K562 (cell line): ENCODE measurements at regions of chr15 and their contacts with region 1.

Region 1: GRCh38 chr15:78565097-78565951 is at the start of gene CHRNA5:
- DNase-seq: peak; percentile 90 to 95 (median 94)
- ATAC-seq: peak; percentile 96
- H3K4me3 ChIP-seq: peak within 1 kb of the TSS; percentile 69
- H3K27ac ChIP-seq: peak within 1 kb of the TSS; percentile 57
- H3K4me1 ChIP-seq: peaks cover 8 to 22% of the 10 kb centered on the region in 2 experiments; a peak in 4 of 5 replicates
- H3K27me3 ChIP-seq: no peaks in the 10 kb centered on the region
- CTCF ChIP-seq: no peak
- EP300 ChIP-seq: peak; percentile 46; the same call in 1 of the 2 replicates
- POLR2A ChIP-seq: peak; percentile 77
- RAD21 ChIP-seq: no peak
- polyA plus RNA-seq, gene CHRNA5: 2.8 to 3.4 TPM

Region 2: DNA sequence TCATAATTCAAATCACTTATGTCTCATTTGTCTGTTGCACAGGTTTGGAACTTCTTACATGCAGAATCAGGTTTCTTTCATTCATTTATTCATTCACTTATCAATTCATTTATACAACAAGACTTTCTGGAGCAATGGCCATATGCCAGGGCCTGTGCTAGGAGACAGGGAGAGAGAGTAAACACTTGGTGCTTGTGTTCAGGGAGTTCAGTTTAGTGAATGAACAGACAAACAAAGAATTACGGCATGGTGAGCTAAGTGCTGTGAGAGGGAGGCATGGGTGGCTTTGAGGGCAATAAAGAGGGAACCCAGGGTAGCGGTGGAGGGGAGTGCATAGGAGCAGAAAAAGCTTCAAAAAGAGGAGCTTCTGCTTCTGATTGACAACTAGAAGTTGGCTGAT is 135.8 kb before region 1 on chr15:
- CTCF ChIA-PET with region 1: no interaction called
- POLR2A ChIA-PET with region 1: no interaction called
- in situ Hi-C with region 1: no loop called
- intact Hi-C with region 1: no loop called
- DNase-seq: no peak
- ATAC-seq: no peak
- H3K4me3 ChIP-seq: no peak overlapping the region
- H3K27ac ChIP-seq: no peak overlapping the region
- H3K4me1 ChIP-seq: peaks cover 0 to 2% of the 10 kb centered on the region in 2 experiments; a peak in 4 of 5 replicates
- H3K27me3 ChIP-seq: no peaks in the 10 kb centered on the region
- CTCF ChIP-seq: no peak
- EP300 ChIP-seq: no peak
- POLR2A ChIP-seq: no peak
- RAD21 ChIP-seq: no peak

Region 3: DNA sequence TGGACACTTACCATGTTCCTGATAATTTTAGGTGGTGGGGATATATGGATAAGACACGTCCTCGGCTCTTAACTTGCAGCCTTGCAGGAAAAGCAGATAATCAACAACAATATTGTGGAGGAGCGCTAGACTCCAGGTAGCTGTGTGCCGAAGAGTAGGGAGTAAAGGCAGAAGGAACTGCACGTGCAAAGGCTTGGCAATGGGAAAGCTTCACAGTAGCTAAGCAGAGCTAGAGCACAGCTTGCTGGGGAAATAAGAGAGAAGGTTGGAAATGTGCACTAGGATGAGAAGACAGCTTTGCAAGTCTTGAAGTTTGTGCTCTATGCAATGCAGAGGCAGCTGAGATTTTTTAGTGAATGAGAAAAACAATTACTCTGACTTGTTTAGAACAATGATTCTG is 12.7 kb before region 1 on chr15:
- CTCF ChIA-PET with region 1: no interaction called
- POLR2A ChIA-PET with region 1: interaction called, 62 read pairs
- in situ Hi-C with region 1: no loop called
- intact Hi-C with region 1: no loop called
- DNase-seq: no peak
- ATAC-seq: peak; percentile 31
- H3K4me3 ChIP-seq: no peak overlapping the region
- H3K27ac ChIP-seq: no peak overlapping the region
- H3K4me1 ChIP-seq: no peaks in the 10 kb centered on the region
- H3K27me3 ChIP-seq: no peaks in the 10 kb centered on the region
- CTCF ChIP-seq: no peak
- EP300 ChIP-seq: no peak
- POLR2A ChIP-seq: no peak
- RAD21 ChIP-seq: no peak

Region 4: DNA sequence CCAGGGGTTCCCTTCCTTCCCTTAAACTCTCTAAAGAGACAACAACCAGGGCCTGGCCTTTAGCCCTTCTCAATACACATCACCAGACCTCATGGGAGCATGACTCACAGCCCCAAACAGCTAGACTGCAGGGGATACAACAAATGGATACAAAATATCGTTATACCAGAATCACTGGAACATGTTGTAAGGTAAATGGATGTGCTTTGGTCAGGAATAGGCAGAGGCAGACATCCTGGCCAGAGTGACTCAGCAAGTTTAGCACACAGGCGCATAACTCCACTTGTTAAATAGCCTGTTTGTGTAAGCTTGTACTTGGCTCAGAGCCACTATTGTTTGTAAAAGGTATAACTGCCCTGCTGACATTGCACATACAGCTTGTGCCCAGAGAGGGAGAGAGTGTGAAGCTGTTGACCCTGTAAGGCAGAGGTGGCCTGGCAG is 763.9 kb after region 1 on chr15:
- CTCF ChIA-PET with region 1: no interaction called
- POLR2A ChIA-PET with region 1: no interaction called
- in situ Hi-C with region 1: no loop called
- intact Hi-C with region 1: no loop called
- DNase-seq: peak in 2 of 4 experiments; percentile 27 to 49
- ATAC-seq: peak; percentile 65
- H3K4me3 ChIP-seq: no peak overlapping the region
- H3K27ac ChIP-seq: peak overlapping the region; percentile 36; the same call in 1 of the 3 replicates
- H3K4me1 ChIP-seq: peaks cover 0 to 3% of the 10 kb centered on the region in 2 experiments; a peak in 1 of 5 replicates
- H3K27me3 ChIP-seq: no peaks in the 10 kb centered on the region
- CTCF ChIP-seq: no peak
- EP300 ChIP-seq: no peak
- POLR2A ChIP-seq: no peak
- RAD21 ChIP-seq: no peak